H1 (cell line): ENCODE measurements at regions of chr18 and their contacts with region 1.

Region 1: DNA sequence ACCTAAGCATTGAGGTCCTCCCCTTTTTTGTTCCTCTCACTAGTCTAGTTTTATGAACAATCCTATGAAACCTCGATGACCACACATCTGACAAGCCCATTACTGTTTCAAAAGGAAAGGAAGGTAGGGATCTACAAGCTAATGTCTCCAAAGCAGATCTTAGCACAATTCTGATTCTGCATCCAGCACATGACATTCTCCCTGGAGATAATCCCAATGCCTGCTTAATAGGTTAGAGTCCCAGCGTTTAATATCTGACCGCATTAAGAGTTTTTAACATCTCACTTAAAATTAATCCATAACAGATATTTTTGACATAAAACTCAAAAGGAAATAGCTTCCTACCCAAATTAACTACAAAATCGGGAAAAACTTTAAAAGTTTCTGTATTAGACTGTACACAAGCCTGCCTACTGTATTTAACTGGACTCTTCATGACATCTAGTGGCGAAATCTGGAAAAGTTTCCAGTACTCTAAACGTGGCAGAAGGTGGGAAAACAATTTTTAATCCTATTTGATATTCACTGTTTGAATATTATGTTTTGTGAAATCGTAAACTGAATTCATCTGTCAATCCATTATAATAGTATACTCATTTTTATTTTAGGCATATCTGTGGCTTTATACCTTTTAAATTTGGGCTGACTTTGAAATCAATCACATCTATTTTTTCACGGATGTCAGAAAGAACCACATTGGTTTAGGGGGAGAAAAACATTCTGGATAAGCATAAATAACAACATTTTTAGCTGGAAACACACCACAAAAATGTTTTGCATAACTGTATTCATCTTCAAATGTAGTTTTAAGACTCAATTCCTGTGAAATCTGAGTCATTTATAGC is 62.4 kb downstream of the TXNL1 start:
- DNase-seq: no peak
- H3K4me3 ChIP-seq: no peak overlapping the region
- H3K27ac ChIP-seq: no peak overlapping the region
- H3K4me1 ChIP-seq: peaks cover 0 to 2% (median 0%) of the 10 kb centered on the region in 4 experiments; a peak in 2 of 7 replicates
- H3K27me3 ChIP-seq: no peaks in the 10 kb centered on the region
- CTCF ChIP-seq: peak in 2 of 3 experiments; percentile 41 to 51; a peak in 2 of 4 replicates
- EP300 ChIP-seq: no peak
- POLR2A ChIP-seq: no peak
- RAD21 ChIP-seq: peak; percentile 81 to 83

Region 2: DNA sequence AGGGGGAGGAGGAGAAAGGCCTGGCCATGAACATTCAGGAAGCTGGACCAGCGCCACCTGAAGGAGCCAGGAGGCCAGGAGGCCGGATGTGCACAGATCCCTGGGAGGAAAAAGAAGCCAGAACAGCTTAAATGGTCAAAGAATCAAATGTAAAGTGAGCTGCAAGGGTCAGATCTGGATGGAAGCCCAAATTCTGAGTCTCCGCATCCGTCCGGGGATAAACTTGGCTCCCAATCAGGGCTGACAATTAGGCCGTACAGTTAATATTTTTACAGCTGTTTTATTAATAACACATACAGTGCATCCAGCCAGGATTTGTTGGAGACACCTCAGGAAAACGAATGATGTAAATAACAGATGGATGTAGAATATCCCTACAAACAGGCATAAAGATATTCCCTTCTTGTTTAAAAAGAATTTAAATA is 492.9 kb before region 1 on chr18:
- CTCF ChIA-PET with region 1: no interaction called
- POLR2A ChIA-PET with region 1: no interaction called
- DNase-seq: no peak
- H3K4me3 ChIP-seq: no peak overlapping the region
- H3K27ac ChIP-seq: no peak overlapping the region
- H3K4me1 ChIP-seq: peaks cover 0 to 7% (median 0%) of the 10 kb centered on the region in 4 experiments; a peak in 3 of 7 replicates
- H3K27me3 ChIP-seq: no peaks in the 10 kb centered on the region
- CTCF ChIP-seq: peak; percentile 33 to 41 (median 41); a peak in 3 of 4 replicates
- EP300 ChIP-seq: no peak
- POLR2A ChIP-seq: no peak
- RAD21 ChIP-seq: peak; percentile 37 to 51

Region 3: DNA sequence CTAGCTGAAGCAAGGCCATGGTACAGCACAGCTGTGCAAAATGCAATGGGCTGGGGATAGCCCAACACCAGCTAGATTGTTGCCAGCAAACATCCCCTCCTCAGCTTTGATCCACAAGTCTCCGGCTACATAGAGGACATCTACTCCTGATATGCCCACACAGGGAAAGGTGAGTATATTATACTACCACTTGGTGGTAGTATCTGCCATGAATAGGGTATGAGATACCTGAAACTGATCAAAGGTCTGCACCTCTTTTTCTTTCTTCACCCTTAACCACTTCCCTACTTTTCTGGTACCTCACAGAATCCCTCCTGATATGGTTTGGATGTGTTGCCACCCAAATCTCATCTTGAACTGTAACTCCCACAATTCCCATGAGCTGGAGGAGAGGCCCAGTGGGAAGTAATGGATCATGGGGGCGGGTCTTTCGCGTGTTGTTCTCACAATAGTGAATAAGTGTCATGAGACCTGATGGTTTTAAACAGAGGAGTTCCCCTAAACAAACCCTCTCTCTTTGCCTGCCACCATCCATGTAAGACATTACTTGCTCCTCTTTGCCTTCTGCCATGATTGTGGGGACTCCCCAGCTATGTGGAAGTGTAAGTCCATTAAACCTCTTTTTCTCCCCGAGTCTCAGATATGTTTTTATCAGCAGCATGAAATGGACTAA is 217.3 kb before region 1 on chr18:
- CTCF ChIA-PET with region 1: interaction called, 18 read pairs
- POLR2A ChIA-PET with region 1: no interaction called
- DNase-seq: no peak
- H3K4me3 ChIP-seq: no peak overlapping the region
- H3K27ac ChIP-seq: no peak overlapping the region
- H3K4me1 ChIP-seq: 0 out of 7 replicates have a peak, but pooled peaks cover 0 to 2% (median 0%) of the 10 kb centered on the region in 4 experiments
- H3K27me3 ChIP-seq: no peaks in the 10 kb centered on the region
- CTCF ChIP-seq: peak in 1 of 3 experiments; percentile 32; a peak in 1 of 4 replicates
- EP300 ChIP-seq: no peak
- POLR2A ChIP-seq: no peak
- RAD21 ChIP-seq: peak; percentile 70 to 72

Region 4: DNA sequence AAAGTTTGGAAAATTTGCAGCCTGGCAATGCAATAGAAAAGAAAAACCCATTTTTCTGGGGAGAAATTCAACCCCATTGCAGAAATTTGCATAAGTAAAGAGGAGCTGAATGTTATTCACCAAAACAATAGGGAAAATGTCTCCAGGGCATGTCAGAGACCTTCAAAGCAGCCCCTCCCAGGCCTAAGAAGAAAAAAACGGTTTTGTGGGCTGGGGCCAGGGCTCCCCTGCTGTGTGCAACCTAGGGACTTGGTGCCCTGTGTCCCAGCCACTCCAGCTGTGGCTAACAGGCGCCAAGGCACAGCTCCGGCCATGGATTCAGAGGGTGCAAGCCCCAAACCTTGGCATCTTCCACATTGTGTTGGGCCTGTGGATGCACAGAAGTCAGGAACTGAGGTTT is 162.2 kb before region 1 on chr18:
- CTCF ChIA-PET with region 1: no interaction called
- POLR2A ChIA-PET with region 1: no interaction called
- DNase-seq: peak in 1 of 2 experiments; percentile 19
- H3K4me3 ChIP-seq: no peak overlapping the region
- H3K27ac ChIP-seq: no peak overlapping the region
- H3K4me1 ChIP-seq: peaks cover 0 to 5% (median 1%) of the 10 kb centered on the region in 4 experiments; a peak in 1 of 7 replicates
- H3K27me3 ChIP-seq: no peaks in the 10 kb centered on the region
- CTCF ChIP-seq: no peak
- EP300 ChIP-seq: no peak
- POLR2A ChIP-seq: no peak
- RAD21 ChIP-seq: no peak

Region 5: GRCh38 chr18:56563568-56563967 is 12.5 kb before region 1 on chr18:
- CTCF ChIA-PET with region 1: interaction called, 22 read pairs
- POLR2A ChIA-PET with region 1: no interaction called
- DNase-seq: peak; percentile 69 to 79
- H3K4me3 ChIP-seq: no peak overlapping the region
- H3K27ac ChIP-seq: no peak overlapping the region
- H3K4me1 ChIP-seq: no peaks in the 10 kb centered on the region; a peak in 3 of 7 replicates
- H3K27me3 ChIP-seq: no peaks in the 10 kb centered on the region
- CTCF ChIP-seq: peak; percentile 92 to 99 (median 94)
- EP300 ChIP-seq: no peak
- POLR2A ChIP-seq: no peak
- RAD21 ChIP-seq: peak; percentile 80 to 81